ENCODE measurements at regions of chrX and their contacts with region 1.

Region 1: GRCh38 chrX:39050427-39050826 is 249.2 kb downstream of the MID1IP1 start:
- DNase-seq: no peak
- ATAC-seq: no peak
- H3K4me3 ChIP-seq: no peak overlapping the region
- H3K27ac ChIP-seq: no peak overlapping the region
- H3K4me1 ChIP-seq: no peaks in the 10 kb centered on the region
- H3K27me3 ChIP-seq: no peaks in the 10 kb centered on the region
- CTCF ChIP-seq: no peak
- EP300 ChIP-seq: no peak
- POLR2A ChIP-seq: no peak
- RAD21 ChIP-seq: no peak

Region 2: DNA sequence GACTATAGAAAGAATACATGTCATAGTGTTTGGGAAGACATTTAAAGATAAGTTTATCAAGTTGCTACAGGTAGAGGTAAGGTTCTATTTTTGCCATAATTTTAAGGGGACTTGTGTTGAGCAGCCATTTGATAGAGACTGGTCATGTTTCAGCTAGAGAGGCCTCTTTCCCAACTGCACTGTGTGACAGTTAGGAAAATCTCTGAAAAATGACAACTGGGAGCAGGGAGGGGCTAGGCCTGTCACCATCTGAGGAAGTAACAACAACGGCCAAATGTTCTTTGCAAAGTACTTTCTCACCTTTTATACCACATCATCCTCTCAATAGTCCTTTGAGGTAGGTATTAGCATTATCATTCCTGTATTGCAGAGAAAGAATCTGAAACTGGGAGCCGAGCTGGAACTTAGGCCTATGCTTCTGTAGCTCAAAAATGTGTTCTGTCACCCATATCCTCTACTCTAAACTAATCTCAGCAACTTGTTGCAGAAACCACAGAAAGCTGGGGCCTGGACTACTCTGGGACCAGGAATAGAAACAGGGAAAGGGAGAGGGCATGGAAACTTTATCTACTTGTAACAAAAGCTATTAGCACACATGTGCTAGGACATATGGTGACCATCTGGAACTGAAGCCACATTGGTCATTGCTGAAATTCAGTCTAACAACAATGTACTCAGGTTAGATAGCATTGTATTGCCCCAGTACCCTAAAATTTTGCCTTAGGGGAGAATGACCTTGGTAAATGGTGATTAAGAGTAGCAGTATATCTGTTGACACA is 50.3 kb before region 1 on chrX:
- CTCF ChIA-PET with region 1: no interaction called
- POLR2A ChIA-PET with region 1: no interaction called
- in situ Hi-C with region 1: no loop called
- intact Hi-C with region 1: loop called (anchors 10 kb)
- DNase-seq: no peak
- ATAC-seq: no peak
- H3K4me3 ChIP-seq: no peak overlapping the region
- H3K27ac ChIP-seq: no peak overlapping the region
- H3K4me1 ChIP-seq: no peaks in the 10 kb centered on the region; a peak in 2 of 5 replicates
- H3K27me3 ChIP-seq: no peaks in the 10 kb centered on the region
- CTCF ChIP-seq: no peak
- EP300 ChIP-seq: no peak
- POLR2A ChIP-seq: no peak
- RAD21 ChIP-seq: no peak

Measured in K562 (cell line).